B cell (primary cell): ENCODE measurements at regions of chr5 and their contacts with region 1.

Region 1: GRCh38 chr5:6480133-6481051 is 31.7 kb downstream of the UBE2QL1 start:
- DNase-seq: peak; percentile 36
- ATAC-seq: no peak
- H3K4me3 ChIP-seq: no peak overlapping the region
- H3K4me3 Mint-ChIP-seq: no peak overlapping the region
- H3K27ac ChIP-seq: no peak overlapping the region
- H3K27ac Mint-ChIP-seq: peak overlapping the region; percentile 50
- H3K4me1 ChIP-seq: peaks cover 9 to 34% of the 10 kb centered on the region in 2 donors
- H3K4me1 Mint-ChIP-seq: peaks cover 37% of the 10 kb centered on the region
- H3K27me3 ChIP-seq: no peaks in the 10 kb centered on the region
- H3K27me3 Mint-ChIP-seq: no peaks in the 10 kb centered on the region
- CTCF ChIP-seq: no peak

Region 2: GRCh38 chr5:6377905-6378765 is 102.3 kb before region 1 on chr5 and contains the start of gene MED10:
- CTCF ChIA-PET with region 1: no interaction called
- POLR2A ChIA-PET with region 1: interaction called, 4 read pairs
- intact Hi-C with region 1: loop called (anchors 5 kb)
- DNase-seq: peak; percentile 94
- ATAC-seq: peak; percentile 99
- H3K4me3 ChIP-seq: peak within 1 kb of the TSS; percentile 68 to 97 (median 82)
- H3K4me3 Mint-ChIP-seq: peak within 1 kb of the TSS; percentile 95
- H3K27ac ChIP-seq: peak within 1 kb of the TSS; percentile 73 to 76
- H3K27ac Mint-ChIP-seq: peak within 1 kb of the TSS; percentile 95
- H3K4me1 ChIP-seq: peaks cover 16 to 21% of the 10 kb centered on the region in 2 donors
- H3K4me1 Mint-ChIP-seq: peaks cover 34% of the 10 kb centered on the region
- H3K27me3 ChIP-seq: no peaks in the 10 kb centered on the region
- H3K27me3 Mint-ChIP-seq: peaks cover 3% of the 10 kb centered on the region
- CTCF ChIP-seq: no peak
- total RNA-seq, gene MED10: 49.9 and 51.4 TPM in 2 replicates

Region 3: DNA sequence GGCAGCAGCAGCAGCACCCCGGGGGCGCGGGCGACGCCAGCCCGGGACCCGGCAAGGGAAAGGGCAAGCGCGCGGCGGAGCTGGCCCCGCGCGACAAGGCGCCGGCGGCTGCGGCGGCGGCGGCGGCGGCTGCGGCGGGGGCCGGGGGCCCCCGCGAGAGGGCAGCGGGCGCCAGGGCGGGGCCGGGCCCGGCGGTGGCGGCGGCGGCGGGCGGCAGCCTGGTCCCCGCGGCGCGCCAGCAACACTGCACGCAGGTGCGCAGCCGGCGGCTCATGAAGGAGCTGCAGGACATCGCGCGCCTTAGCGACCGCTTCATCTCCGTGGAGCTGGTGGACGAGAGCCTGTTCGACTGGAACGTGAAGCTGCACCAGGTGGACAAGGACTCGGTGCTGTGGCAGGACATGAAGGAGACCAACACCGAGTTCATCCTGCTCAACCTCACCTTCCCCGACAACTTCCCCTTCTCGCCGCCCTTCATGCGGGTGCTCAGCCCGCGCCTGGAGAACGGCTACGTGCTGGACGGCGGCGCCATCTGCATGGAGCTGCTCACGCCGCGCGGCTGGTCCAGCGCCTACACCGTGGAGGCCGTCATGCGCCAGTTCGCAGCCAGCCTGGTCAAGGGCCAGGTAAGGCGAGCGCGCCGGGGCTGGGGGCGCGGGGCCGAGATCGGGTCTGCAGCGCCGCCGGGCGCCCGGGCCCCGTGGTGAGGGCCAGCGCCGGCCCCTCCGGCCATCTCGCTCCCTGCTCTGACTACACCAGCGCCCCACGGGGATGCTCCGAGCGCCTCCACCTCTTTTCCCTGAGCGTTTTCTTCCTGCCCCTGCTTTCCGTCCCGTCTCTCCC is 31.5 kb before region 1 on chr5 and contains the start of gene UBE2QL1:
- CTCF ChIA-PET with region 1: no interaction called
- POLR2A ChIA-PET with region 1: no interaction called
- intact Hi-C with region 1: loop called (anchors 2 kb)
- DNase-seq: peak; percentile 62
- ATAC-seq: peak; percentile 64
- H3K4me3 ChIP-seq: peak within 1 kb of the TSS in 4 of 5 experiments; percentile 8 to 59 (median 46)
- H3K4me3 Mint-ChIP-seq: peak within 1 kb of the TSS; percentile 88
- H3K27ac ChIP-seq: no peak within 1 kb of the TSS
- H3K27ac Mint-ChIP-seq: peak within 1 kb of the TSS; percentile 22
- H3K4me1 ChIP-seq: peaks cover 10 to 14% of the 10 kb centered on the region in 2 donors
- H3K4me1 Mint-ChIP-seq: peaks cover 14% of the 10 kb centered on the region
- H3K27me3 ChIP-seq: peaks cover 0 to 33% (median 19%) of the 10 kb centered on the region in 4 experiments
- H3K27me3 Mint-ChIP-seq: peaks cover 40% of the 10 kb centered on the region
- CTCF ChIP-seq: no peak
- total RNA-seq, gene UBE2QL1: 1.6 and 1.7 TPM in 2 replicates